ENCODE measurements at regions of chr9 and their contacts with region 1.

Region 1: DNA sequence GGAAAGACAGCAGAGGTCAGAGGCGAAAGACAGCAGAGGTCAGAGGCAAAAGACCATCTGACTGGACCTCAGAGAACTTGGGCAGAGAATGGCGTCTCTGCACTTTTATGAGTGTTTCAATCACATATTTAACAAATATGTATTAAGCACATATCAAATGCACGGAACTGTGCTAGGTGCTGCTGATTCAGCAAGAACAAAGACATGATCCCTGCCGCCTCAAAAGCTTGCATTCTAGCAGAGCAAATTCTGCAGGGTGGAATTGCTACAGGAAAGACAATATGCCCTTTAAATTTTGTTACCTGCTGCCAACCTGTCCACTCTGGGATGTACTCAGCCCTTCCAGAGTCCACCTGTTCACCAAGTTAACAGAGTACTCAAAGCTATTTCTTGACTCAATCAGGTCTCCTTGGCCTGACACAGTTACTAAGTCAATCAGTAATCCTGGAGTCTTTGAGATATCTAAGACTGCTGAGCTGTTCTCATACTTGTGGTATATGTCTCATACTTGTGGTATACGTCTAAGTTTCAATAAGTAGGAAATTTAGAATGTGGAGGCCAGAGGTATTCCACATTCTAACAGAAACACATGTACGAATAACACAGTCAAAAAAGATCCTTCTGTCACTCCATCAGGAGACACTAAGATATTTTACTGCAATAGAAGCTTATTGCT is 131.8 kb downstream of the GNAQ start:
- DNase-seq: no peak
- ATAC-seq: no peak
- H3K4me3 ChIP-seq: no peak overlapping the region
- H3K27ac ChIP-seq: no peak overlapping the region
- H3K4me1 ChIP-seq: peaks cover 9 to 31% of the 10 kb centered on the region in 2 experiments
- H3K27me3 ChIP-seq: no peaks in the 10 kb centered on the region
- CTCF ChIP-seq: no peak
- EP300 ChIP-seq: no peak
- POLR2A ChIP-seq: no peak
- RAD21 ChIP-seq: no peak

Region 2: GRCh38 chr9:77944556-77945243 is 44.9 kb after region 1 on chr9:
- CTCF ChIA-PET with region 1: no interaction called
- POLR2A ChIA-PET with region 1: no interaction called
- in situ Hi-C with region 1: no loop called
- intact Hi-C with region 1: loop called (anchors 5 kb)
- DNase-seq: peak in 1 of 4 experiments; percentile 14
- ATAC-seq: peak; percentile 50; the same call in 2 of the 3 replicates
- H3K4me3 ChIP-seq: no peak overlapping the region
- H3K27ac ChIP-seq: peak overlapping the region; percentile 40; the same call in 1 of the 3 replicates
- H3K4me1 ChIP-seq: peaks cover 0 to 34% of the 10 kb centered on the region in 2 experiments; a peak in 3 of 5 replicates
- H3K27me3 ChIP-seq: no peaks in the 10 kb centered on the region
- CTCF ChIP-seq: 0 out of 6 replicates have a peak, but pooled peaks of 1 of the 3 experiments have one; percentile 19
- EP300 ChIP-seq: no peak
- POLR2A ChIP-seq: no peak
- RAD21 ChIP-seq: no peak

Measured in K562 (cell line).